ENCODE measurements at regions of chr9 and their contacts with region 1.

Region 1: DNA sequence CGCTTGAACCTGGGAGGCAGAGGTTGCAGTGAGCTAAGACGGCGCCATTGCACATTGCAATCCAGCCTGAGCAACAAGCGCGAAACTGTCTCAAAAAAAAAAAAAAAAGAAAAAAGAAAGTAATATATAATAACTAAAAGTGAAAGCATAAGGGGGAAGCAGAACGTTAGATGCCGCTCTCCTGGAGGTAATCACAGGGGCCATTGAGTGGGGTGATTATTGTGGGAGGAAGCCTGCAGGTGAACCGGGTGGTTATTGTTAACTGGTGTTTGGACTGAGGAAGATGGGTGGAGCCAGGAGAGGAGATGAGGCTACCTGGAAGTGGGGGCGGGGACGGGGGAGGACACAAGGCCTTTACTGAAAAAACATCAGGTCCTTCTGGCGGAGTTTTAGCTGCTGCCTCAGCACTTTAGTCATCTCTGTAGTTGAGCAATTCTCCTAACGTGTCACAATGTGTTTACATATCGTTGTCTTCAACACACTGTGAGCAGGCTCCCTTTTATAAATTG is 5.3 kb upstream of the TJP2 start:
- DNase-seq: peak; percentile 82
- ATAC-seq: 0 out of 2 replicates have a peak, but pooled peaks have one; percentile 18
- H3K4me3 ChIP-seq: no peak overlapping the region
- H3K27ac ChIP-seq: no peak overlapping the region
- H3K4me1 ChIP-seq: peaks cover 49% of the 10 kb centered on the region
- H3K27me3 ChIP-seq: no peaks in the 10 kb centered on the region
- CTCF ChIP-seq: no peak

Region 2: GRCh38 chr9:69155341-69156030 is 13.3 kb before region 1 on chr9:
- CTCF ChIA-PET with region 1: interaction called, 13 read pairs
- POLR2A ChIA-PET with region 1: interaction called, 7 read pairs
- intact Hi-C with region 1: no loop called
- DNase-seq: peak; percentile 78
- ATAC-seq: peak; percentile 86
- H3K4me3 ChIP-seq: peak overlapping the region; percentile 7; the same call in 1 of the 2 replicates
- H3K27ac ChIP-seq: peak overlapping the region; percentile 36
- H3K4me1 ChIP-seq: peaks cover 16% of the 10 kb centered on the region
- H3K27me3 ChIP-seq: no peaks in the 10 kb centered on the region
- CTCF ChIP-seq: no peak

Region 3: DNA sequence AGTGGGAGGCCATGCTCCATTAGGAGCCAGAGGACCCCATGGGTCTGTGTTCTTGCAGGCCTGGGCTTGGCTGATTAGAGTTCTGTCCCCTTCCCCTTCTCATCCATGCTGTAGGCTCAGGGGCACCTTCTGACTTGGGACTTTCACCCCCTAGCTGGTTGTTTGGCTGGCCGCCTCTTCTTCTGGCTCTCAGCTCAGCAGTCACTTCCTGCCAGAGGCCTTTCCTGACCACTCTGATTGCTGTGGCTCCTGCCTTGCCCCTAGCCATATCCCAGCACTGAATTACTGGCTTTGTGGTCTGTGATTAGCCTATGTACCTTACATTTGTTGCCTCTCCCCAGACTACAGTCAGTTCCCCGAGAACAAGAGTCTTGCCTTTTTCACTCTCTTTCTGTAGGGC is 170.9 kb after region 1 on chr9:
- CTCF ChIA-PET with region 1: no interaction called
- POLR2A ChIA-PET with region 1: no interaction called
- intact Hi-C with region 1: no loop called
- DNase-seq: no peak
- ATAC-seq: no peak
- H3K4me3 ChIP-seq: no peak overlapping the region
- H3K27ac ChIP-seq: no peak overlapping the region
- H3K4me1 ChIP-seq: no peaks in the 10 kb centered on the region
- H3K27me3 ChIP-seq: no peaks in the 10 kb centered on the region
- CTCF ChIP-seq: no peak